ENCODE measurements at regions of chr17 and their contacts with region 1.

Region 1: DNA sequence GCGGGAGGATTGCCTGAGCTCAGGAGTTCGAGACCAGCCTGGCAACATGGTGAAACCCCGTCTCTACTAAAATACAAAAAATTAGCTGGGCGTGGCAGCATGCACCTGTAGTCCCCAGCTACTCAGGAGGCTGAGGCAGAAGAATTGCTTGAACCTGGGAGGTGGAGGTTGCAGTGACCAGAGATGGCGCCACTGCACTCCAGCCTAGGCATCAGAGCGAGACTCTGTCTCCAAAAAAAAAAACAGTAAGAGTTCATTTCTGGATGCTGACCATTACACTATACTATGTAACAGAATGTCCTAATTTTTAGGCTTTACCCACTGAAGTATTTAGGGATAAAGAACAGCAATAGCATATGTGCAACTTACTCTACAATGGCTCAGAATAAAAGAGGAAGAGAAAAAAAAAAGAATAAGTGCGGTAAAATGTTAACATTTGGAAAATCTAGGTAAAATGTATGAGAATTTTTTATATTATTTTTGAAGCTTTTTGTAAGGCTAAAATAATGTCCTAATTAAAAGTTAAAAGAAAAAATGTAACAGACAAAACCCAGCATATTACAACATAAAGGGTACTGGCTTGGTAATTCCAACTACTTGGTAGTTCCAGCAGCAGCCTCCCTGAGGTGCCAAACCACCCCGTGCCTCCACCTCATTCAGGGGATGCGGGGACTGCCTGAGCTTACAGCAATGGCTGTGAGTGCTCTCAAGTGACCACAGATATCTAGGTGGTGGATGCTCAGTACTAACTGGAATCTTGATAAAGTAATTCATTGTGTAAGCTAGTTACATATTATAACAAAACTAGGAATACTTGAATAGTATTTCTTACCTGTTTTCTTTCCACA is 10.9 kb downstream of the COPS3 start:
- DNase-seq: peak; percentile 9
- H3K4me3 ChIP-seq: no peak overlapping the region
- H3K27ac ChIP-seq: no peak overlapping the region
- H3K4me1 ChIP-seq: no peaks in the 10 kb centered on the region
- H3K27me3 ChIP-seq: no peaks in the 10 kb centered on the region
- CTCF ChIP-seq: peak; percentile 14 to 39
- POLR2A ChIP-seq: no peak

Region 2: GRCh38 chr17:17280613-17281549 is 10.7 kb after region 1 on chr17 and contains the start of gene COPS3:
- CTCF ChIA-PET with region 1: interaction called, 11 read pairs
- POLR2A ChIA-PET with region 1: interaction called, 4 read pairs
- dilution Hi-C with region 1: no loop called
- intact Hi-C with region 1: no loop called
- DNase-seq: peak; percentile 98
- H3K4me3 ChIP-seq: peak within 1 kb of the TSS; percentile 70 to 98 (median 79)
- H3K27ac ChIP-seq: peak within 1 kb of the TSS; percentile 86
- H3K4me1 ChIP-seq: peaks cover 13% of the 10 kb centered on the region
- H3K27me3 ChIP-seq: no peaks in the 10 kb centered on the region
- CTCF ChIP-seq: no peak
- POLR2A ChIP-seq: peak; percentile 76
- total RNA-seq, gene COPS3: 68.4 and 80.9 TPM in 2 replicates

Region 3: DNA sequence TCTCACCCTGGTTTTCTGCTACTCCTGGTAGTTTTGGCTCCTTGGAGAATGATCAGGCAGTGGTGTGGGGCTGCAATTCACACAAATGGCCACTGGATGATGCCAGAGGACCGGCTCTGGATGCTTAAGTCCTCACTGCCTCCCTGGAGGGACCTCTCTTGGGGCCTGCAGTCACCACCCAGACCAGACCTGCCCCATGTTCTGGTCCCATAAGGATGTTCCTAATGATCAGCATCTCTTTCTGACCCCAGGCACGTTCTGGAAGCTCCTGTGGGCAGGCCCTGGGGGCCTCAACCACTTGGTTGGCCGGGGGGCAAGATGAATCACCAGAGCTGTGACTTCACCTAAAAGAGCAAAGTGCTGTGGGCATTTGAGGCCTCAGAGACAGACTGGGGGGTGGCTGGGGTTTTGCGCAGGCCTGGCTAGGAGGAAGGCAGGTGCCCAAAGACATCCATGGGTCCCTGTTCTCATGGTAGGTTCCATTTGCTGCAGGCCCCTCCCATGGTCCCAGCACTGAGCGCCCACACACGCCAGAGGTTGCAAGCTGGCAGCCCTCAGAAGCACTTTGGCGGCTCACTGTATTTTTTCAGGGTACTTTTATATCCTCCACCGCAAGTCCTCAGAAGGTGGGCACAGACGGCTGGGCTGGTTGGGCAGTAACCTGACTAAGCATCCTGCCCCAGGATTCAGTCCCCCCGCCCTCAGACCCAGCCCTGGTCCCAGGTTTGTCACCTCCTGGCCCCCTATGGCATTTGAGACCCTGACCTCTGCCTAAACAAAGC is 86.2 kb after region 1 on chr17:
- CTCF ChIA-PET with region 1: no interaction called
- POLR2A ChIA-PET with region 1: no interaction called
- dilution Hi-C with region 1: no loop called
- intact Hi-C with region 1: no loop called
- DNase-seq: peak; percentile 82
- H3K4me3 ChIP-seq: no peak overlapping the region
- H3K27ac ChIP-seq: no peak overlapping the region
- H3K4me1 ChIP-seq: peaks cover 14% of the 10 kb centered on the region
- H3K27me3 ChIP-seq: no peaks in the 10 kb centered on the region
- CTCF ChIP-seq: peak; percentile 99 to 100
- POLR2A ChIP-seq: no peak